ENCODE measurements at regions of chr4 and their contacts with region 1.

Region 1: DNA sequence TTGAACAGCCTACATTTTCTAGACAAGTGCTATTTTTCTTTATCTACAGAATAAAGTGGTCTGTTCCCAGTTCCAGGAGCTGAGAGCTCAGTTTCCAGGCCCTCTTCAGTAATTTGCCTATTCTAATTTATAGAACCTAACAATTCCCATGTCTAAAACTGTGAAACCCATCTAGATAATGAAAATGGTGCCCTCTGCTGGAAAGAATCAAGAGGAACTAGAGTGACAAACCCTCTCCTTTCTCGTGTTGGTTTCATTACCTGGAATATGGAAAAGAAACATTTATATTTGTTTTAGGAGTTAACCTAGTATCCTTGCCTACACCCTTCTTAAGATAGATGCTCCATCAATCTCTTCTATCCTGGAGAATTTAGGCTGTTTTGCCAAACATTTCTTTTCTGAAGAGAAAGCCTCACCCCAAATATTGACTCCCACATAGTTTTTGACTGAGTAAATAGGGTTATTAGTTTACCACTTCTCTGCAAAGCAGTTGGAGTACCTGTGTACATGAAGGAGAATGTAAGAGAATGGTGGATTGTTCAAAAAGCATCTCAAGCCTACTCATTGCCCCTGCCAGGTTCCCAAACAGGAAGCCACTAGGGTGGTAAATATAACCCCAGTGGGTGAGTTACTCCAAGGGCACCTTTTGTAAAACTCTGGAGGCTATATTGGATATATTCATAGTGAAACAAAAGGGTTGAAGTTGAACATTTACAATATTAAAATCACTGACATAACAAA is 121.6 kb downstream of the RASL11B start:
- DNase-seq: peak; percentile 61
- ATAC-seq: no peak
- H3K4me3 ChIP-seq: no peak overlapping the region
- H3K4me3 Mint-ChIP-seq: no peak overlapping the region
- H3K27ac ChIP-seq: no peak overlapping the region
- H3K27ac Mint-ChIP-seq: no peak overlapping the region
- H3K4me1 ChIP-seq: no peaks in the 10 kb centered on the region
- H3K4me1 Mint-ChIP-seq: no peaks in the 10 kb centered on the region
- H3K27me3 ChIP-seq: no peaks in the 10 kb centered on the region
- H3K27me3 Mint-ChIP-seq: no peaks in the 10 kb centered on the region
- CTCF ChIP-seq: peak; percentile 83

Region 2: GRCh38 chr4:52376132-52376704 is 607.5 kb before region 1 on chr4:
- CTCF ChIA-PET with region 1: interaction called, 42 read pairs
- POLR2A ChIA-PET with region 1: no interaction called
- intact Hi-C with region 1: loop called (anchors 1 kb)
- DNase-seq: peak; percentile 49
- ATAC-seq: no peak
- H3K4me3 ChIP-seq: no peak overlapping the region
- H3K4me3 Mint-ChIP-seq: no peak overlapping the region
- H3K27ac ChIP-seq: no peak overlapping the region
- H3K27ac Mint-ChIP-seq: no peak overlapping the region
- H3K4me1 ChIP-seq: no peaks in the 10 kb centered on the region
- H3K4me1 Mint-ChIP-seq: no peaks in the 10 kb centered on the region
- H3K27me3 ChIP-seq: peaks cover 0 to 3% (median 0%) of the 10 kb centered on the region in 4 experiments
- H3K27me3 Mint-ChIP-seq: peaks cover 26% of the 10 kb centered on the region
- CTCF ChIP-seq: peak; percentile 80

Region 3: DNA sequence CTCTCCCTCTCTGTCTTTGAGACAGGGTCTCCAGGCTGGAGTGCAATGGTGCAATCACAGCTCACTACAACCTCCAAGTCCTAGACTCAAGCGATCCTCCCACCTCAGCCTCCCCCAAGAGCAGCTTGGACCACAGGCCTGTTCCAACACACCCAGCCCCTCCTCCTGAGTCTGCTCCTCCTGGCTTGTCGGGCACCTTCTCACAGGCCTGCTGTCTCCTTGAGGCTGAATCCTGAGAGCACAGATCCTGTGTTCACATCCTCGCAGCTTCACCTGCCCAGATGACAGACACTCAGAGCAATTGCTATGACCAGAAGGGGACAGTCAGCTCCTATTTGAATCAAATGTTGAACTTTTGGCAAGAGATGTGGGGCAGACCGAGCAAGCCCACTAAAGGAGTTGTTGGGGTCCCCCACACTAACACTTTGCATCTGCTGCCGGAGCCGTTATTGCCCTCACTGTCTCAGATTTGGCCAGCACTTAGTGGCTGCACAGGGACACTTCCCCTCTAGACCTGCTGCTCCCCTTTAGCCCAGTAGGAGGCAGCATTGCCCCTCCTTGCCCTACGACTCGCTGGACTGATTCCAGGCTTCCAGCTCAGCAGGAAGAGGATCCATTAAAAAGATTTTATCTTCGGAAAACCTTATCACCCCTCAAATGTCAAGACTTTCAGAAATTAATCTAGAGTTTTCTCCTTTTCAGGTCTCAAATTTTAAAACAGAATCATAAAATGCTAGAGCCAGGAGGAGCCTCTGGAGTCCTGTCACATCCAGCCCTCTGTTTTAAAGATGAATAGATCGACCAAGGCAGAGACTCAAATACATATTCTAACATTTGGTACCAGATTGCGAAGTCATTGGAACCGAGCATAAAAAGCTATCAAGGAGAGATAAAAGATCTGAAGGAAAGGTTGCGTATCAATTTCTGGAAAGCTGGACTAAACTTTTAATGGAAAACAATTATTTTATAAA is 438.3 kb before region 1 on chr4:
- CTCF ChIA-PET with region 1: interaction called, 167 read pairs
- POLR2A ChIA-PET with region 1: no interaction called
- intact Hi-C with region 1: no loop called
- DNase-seq: peak; percentile 64
- ATAC-seq: peak; percentile 43
- H3K4me3 ChIP-seq: no peak overlapping the region
- H3K4me3 Mint-ChIP-seq: no peak overlapping the region
- H3K27ac ChIP-seq: no peak overlapping the region
- H3K27ac Mint-ChIP-seq: no peak overlapping the region
- H3K4me1 ChIP-seq: no peaks in the 10 kb centered on the region
- H3K4me1 Mint-ChIP-seq: no peaks in the 10 kb centered on the region
- H3K27me3 ChIP-seq: peaks cover 0 to 4% (median 0%) of the 10 kb centered on the region in 4 experiments
- H3K27me3 Mint-ChIP-seq: peaks cover 12% of the 10 kb centered on the region
- CTCF ChIP-seq: peak; percentile 88

Region 4: DNA sequence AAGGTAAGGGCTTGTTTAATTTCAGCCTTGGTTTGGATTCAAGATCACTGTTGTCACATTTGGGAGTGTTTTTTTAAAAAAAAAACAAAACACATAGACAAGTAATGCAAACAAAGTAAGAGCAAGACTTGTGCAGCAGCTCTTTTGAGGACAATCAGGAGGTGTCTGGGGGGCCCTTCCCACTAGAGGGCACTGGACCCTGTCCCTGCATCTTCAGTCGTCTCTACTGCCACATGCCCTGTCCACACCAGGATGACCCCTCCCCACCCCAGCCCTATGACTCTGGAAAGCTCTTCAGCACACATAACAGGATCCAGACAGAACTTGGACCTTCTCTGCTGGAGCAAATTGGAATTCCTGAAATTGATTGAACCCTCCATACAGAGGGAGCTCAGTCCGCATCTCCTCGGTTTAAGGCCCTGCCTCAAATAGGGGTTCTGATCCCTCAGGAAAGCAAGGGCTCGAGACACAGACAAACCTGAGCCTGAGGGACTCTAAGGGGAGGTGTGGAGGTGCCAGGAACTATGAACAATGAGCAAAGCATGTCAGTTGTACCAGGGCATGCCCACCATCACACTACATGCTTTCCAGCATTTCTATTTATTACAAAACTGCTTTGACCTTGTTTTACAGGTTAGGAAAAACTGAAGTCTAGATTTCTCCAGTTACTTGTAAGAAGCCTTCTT is 395.5 kb before region 1 on chr4:
- CTCF ChIA-PET with region 1: interaction called, 14 read pairs
- POLR2A ChIA-PET with region 1: no interaction called
- intact Hi-C with region 1: no loop called
- DNase-seq: peak; percentile 14
- ATAC-seq: no peak
- H3K4me3 ChIP-seq: no peak overlapping the region
- H3K4me3 Mint-ChIP-seq: no peak overlapping the region
- H3K27ac ChIP-seq: no peak overlapping the region
- H3K27ac Mint-ChIP-seq: no peak overlapping the region
- H3K4me1 ChIP-seq: no peaks in the 10 kb centered on the region
- H3K4me1 Mint-ChIP-seq: no peaks in the 10 kb centered on the region
- H3K27me3 ChIP-seq: peaks cover 0 to 4% (median 0%) of the 10 kb centered on the region in 4 experiments
- H3K27me3 Mint-ChIP-seq: peaks cover 5% of the 10 kb centered on the region
- CTCF ChIP-seq: no peak

Measured in B cell (primary cell).